ENCODE measurements at regions of chr14 and their contacts with region 1.

Region 1: GRCh38 chr14:35320472-35320871 is 28.3 kb downstream of the PSMA6 start:
- DNase-seq: no peak
- H3K4me3 Mint-ChIP-seq: no peak overlapping the region
- H3K27ac Mint-ChIP-seq: no peak overlapping the region
- H3K4me1 Mint-ChIP-seq: peaks cover 11% of the 10 kb centered on the region
- H3K27me3 Mint-ChIP-seq: no peaks in the 10 kb centered on the region

Region 2: GRCh38 chr14:35254736-35255135 is 65.7 kb before region 1 on chr14:
- intact Hi-C with region 1: loop called (anchors 2 kb)
- DNase-seq: peak; percentile 66
- H3K4me3 Mint-ChIP-seq: peak overlapping the region; percentile 41
- H3K27ac Mint-ChIP-seq: peak overlapping the region; percentile 80
- H3K4me1 Mint-ChIP-seq: peaks cover 38% of the 10 kb centered on the region
- H3K27me3 Mint-ChIP-seq: no peaks in the 10 kb centered on the region

Region 3: DNA sequence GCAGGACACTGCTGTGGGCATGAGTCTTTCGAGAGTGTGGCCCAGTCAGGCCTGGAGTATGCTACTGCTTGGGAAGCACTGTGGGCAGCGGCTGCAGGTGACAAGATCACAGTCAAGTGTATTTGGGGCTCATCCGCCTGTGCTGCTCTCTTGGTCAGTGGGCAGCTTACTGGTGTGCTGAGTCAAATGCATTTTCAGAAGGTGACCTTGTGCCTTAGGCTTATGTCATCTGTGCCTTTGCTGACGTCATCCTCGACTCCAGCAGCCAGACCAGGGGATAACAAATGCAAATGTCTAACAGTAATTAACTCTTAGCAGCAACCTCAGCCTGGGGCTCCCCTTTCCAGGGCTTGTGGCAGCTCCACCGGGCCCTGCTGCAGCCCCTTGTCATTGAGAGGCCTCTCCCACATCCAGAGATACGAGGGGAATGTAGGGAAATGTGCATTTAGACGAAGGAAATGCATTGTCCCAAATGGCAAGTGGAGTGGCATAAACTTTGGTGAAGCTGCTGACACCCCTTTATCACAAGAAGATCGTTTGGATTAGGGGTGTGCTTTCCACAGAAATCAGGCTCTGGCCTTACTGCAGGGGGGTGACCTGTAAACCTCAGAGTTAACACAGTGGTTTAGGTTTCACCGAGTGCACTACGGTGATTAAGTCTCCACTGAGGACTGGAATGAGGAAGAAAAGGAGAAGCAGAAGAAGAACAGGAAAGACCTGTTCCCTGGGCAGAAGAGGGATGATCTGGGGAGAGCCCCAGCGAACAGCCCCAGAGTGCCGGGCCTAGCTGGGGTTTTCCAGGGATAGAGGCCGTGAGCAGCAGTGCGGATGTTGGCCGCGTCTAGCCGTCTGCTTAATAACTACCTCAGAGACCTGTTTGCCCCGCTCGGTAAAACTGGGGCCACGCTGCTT is 11.4 kb after region 1 on chr14:
- intact Hi-C with region 1: loop called (anchors 1 kb)
- DNase-seq: no peak
- H3K4me3 Mint-ChIP-seq: peak overlapping the region; percentile 79
- H3K27ac Mint-ChIP-seq: peak overlapping the region; percentile 91
- H3K4me1 Mint-ChIP-seq: peaks cover 30% of the 10 kb centered on the region
- H3K27me3 Mint-ChIP-seq: no peaks in the 10 kb centered on the region

Region 4: DNA sequence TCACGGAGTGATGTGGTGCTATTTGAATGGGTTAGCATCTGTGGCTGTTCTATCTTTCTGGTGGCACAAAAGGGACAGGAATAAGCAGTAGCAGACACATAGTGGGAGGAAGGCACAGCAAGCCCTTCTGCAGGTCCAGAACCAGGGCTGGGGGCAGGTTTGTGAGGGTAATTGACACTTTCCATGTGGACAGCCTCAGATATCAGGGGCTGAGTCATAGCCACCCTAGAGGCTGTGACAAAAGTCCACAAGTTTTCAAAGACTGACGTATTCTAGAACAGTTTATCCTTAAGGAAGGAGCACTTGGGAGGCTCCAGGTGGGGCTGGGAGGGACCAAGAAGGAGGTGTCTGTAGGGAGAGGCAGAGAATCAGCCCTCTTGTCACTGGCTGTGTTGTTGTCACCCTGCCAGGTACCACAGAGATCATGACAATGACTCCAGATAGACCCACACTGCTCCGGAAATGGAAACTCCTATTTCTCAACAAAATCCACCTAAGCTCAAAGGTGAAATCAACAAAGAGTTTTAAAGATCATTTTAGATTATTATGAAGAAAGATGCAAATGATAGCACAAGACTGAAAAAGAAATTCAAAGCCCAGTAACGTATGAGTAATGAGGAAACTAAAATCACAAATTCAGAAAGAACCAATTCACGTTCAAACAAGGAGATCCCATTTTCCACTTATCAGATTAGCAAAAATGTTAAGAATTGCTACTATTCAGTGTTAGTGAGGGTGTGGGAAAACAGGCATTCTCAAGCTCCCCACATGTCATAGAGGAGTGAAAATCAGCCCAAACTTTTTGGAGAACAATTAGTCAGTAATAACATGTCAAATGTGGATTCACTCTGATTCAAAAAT is 35.7 kb after region 1 on chr14:
- intact Hi-C with region 1: loop called (anchors 1 kb)
- DNase-seq: peak; percentile 64
- H3K4me3 Mint-ChIP-seq: peak overlapping the region; percentile 9
- H3K27ac Mint-ChIP-seq: peak overlapping the region; percentile 87
- H3K4me1 Mint-ChIP-seq: peaks cover 26% of the 10 kb centered on the region
- H3K27me3 Mint-ChIP-seq: no peaks in the 10 kb centered on the region

Region 5: DNA sequence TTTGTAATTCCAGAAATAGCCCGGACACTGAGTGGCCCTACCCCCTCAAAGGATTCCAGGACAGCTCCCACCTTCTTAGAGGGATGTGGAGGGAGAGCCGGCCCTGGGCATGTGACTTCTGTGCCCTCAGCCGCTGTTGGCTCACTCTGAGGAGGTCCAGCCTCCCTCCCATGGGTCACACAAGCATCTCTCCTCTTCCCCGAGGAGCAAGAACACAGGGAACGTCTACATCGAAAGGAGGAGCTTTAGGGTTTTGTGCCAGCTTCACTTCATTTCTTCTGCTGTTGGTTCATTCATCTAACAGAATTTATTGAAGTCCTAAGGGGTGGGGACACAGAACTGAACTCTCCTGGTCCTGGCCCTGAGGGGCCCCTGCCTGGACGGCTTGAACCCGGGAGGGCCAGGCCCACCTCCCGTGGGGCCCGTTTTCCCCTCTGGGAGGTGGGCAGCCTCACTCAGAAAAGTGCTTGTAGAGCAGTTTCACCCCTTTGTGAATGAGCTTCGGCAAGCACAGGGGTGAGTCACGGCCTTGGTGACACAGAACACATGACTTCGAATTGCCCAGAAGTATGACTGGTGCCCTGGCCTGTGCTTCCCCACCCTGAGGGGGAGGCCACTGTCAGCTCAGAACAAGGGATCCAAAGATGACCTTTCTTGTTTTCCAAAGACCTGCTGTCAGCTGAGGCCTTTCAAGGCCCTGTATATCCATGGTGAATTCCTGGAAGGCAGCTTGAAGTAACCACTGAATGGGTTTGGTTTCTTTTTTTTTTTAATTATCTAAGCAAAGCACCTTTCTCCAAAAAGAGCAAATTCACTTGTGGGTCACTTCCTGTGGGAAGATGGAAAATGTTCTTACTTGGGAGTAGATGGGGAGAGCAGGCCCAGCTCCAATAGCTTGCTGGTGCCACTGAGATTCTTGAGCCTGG is 44.9 kb after region 1 on chr14:
- intact Hi-C with region 1: loop called (anchors 2 kb)
- DNase-seq: peak; percentile 84
- H3K4me3 Mint-ChIP-seq: peak overlapping the region; percentile 63
- H3K27ac Mint-ChIP-seq: peak overlapping the region; percentile 89
- H3K4me1 Mint-ChIP-seq: peaks cover 45% of the 10 kb centered on the region
- H3K27me3 Mint-ChIP-seq: no peaks in the 10 kb centered on the region

Measured in activated CD4-positive, alpha-beta T cell treated with anti-CD3 and anti-CD28 coated beads, Interleukin-2, amount 10 ng/mL, durations not matched to agents 24 days and 14 days (primary cell).